MCF 10A (cell line): ENCODE measurements at regions of chr7 and their contacts with region 1.

Region 1: GRCh38 chr7:38908759-38909335 is at the start of gene VPS41:
- DNase-seq: peak; percentile 83
- H3K4me3 Mint-ChIP-seq: peak within 1 kb of the TSS; percentile 89
- H3K27ac Mint-ChIP-seq: peak within 1 kb of the TSS; percentile 90
- H3K4me1 Mint-ChIP-seq: peaks cover 14% of the 10 kb centered on the region
- H3K27me3 Mint-ChIP-seq: no peaks in the 10 kb centered on the region
- CTCF ChIP-seq: no peak
- total RNA-seq, gene VPS41: 31.4 and 45.1 TPM in 2 replicates

Region 2: DNA sequence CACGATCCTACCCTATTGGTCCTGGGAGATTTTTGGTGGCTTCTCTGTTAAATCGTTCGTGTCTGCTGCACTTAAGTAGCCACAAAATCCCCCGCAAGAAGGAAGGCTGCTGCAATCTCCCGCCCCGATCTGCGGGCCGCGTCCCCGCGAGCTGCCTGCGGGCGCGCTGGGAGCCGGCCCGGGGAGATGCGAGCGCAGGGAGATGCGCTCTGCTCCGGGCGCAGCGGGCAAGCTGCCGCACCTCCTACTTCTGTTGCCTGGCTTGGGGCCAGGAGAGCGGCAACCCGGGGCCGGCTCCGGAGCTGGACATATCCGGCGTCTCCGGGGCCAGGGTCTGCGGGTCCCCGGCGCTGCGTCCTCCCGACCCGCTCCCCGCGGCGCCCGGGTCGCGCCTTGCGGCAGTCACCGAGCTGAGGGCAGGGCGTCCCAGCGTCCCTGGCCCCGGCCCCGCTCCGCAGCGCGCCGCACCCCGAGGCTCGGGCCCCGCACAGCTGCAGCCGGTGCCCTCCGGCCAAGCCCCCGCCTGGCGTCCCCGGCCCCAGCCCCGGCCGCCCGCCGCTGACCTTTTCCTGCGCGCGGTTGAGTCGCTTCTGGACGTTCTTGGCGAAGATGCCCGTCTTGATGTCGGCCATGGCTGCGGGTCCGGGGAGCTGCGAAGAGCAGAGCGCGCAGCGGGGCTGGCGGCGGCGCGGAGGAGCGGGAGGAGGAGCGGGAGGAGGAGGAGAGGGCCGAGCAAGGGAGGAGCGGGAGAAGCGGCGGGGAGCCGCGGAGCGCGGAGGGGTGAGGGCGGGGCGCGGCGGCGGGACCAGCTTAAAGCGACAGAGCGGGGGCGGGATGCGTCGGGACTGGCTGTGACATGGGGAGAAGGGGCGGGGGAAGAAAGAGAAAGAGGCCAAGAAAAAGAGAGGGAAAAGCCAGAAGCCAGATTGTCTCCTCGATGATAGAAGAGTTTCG is 277.9 kb before region 1 on chr7 and contains the start of gene AMPH:
- CTCF ChIA-PET with region 1: no interaction called
- POLR2A ChIA-PET with region 1: no interaction called
- intact Hi-C with region 1: no loop called
- DNase-seq: peak; percentile 37
- H3K4me3 Mint-ChIP-seq: peak within 1 kb of the TSS; percentile 68
- H3K27ac Mint-ChIP-seq: no peak within 1 kb of the TSS
- H3K4me1 Mint-ChIP-seq: no peaks in the 10 kb centered on the region
- H3K27me3 Mint-ChIP-seq: peaks cover 18% of the 10 kb centered on the region
- CTCF ChIP-seq: no peak
- total RNA-seq, gene AMPH: 0.63 and 0.81 TPM in 2 replicates

Region 3: DNA sequence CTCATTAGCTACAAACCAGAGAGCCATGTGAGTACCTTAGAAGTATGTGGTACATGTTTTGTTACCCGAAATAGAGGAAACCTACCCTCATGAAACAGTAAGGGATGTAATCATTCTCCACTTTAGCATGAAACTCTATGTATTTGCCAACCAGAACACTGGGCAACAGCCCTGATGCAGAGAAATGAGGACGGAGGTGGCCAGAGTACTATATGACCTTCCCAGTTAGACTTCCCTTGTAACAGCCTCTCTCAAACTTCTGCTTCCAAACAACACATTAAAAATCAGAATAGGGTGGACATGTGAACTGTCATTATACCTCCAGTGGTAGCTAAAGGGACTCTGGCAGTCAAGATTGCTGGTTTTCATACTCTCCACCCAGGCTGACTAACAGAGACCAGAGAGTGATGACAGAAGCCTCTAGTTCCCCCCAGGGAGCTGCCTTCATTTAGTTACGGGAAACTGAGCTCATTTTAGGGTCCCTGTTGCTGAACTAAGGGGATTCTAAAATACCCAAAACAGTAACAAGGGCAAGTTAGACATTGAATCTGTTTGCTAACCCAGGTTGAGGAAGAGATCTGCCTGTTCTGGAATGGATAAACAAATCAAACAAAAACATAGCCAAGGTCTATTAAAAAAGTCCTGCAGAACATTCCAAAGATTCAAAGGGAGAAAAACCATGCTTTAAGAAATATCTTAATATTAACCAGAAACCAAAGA is 83.0 kb before region 1 on chr7:
- CTCF ChIA-PET with region 1: no interaction called
- POLR2A ChIA-PET with region 1: no interaction called
- intact Hi-C with region 1: loop called (anchors 10 kb)
- DNase-seq: no peak
- H3K4me3 Mint-ChIP-seq: no peak overlapping the region
- H3K27ac Mint-ChIP-seq: no peak overlapping the region
- H3K4me1 Mint-ChIP-seq: peaks cover 4% of the 10 kb centered on the region
- H3K27me3 Mint-ChIP-seq: no peaks in the 10 kb centered on the region
- CTCF ChIP-seq: no peak

Region 4: GRCh38 chr7:38920731-38921130 is 11.9 kb after region 1 on chr7:
- CTCF ChIA-PET with region 1: interaction called, 10 read pairs
- POLR2A ChIA-PET with region 1: no interaction called
- intact Hi-C with region 1: no loop called
- DNase-seq: no peak
- H3K4me3 Mint-ChIP-seq: no peak overlapping the region
- H3K27ac Mint-ChIP-seq: no peak overlapping the region
- H3K4me1 Mint-ChIP-seq: no peaks in the 10 kb centered on the region
- H3K27me3 Mint-ChIP-seq: no peaks in the 10 kb centered on the region
- CTCF ChIP-seq: no peak